Panc1 (cell line): ENCODE measurements at regions of chr10 and their contacts with region 1.

Region 1: GRCh38 chr10:32980558-32981468 is 22.8 kb upstream of the ITGB1 start:
- DNase-seq: peak; percentile 95
- ATAC-seq: peak; percentile 90
- H3K4me3 ChIP-seq: peak overlapping the region; percentile 26 to 49
- H3K27ac ChIP-seq: peak overlapping the region; percentile 100
- H3K4me1 ChIP-seq: peaks cover 62% of the 10 kb centered on the region
- H3K27me3 ChIP-seq: no peaks in the 10 kb centered on the region
- CTCF ChIP-seq: no peak

Region 2: DNA sequence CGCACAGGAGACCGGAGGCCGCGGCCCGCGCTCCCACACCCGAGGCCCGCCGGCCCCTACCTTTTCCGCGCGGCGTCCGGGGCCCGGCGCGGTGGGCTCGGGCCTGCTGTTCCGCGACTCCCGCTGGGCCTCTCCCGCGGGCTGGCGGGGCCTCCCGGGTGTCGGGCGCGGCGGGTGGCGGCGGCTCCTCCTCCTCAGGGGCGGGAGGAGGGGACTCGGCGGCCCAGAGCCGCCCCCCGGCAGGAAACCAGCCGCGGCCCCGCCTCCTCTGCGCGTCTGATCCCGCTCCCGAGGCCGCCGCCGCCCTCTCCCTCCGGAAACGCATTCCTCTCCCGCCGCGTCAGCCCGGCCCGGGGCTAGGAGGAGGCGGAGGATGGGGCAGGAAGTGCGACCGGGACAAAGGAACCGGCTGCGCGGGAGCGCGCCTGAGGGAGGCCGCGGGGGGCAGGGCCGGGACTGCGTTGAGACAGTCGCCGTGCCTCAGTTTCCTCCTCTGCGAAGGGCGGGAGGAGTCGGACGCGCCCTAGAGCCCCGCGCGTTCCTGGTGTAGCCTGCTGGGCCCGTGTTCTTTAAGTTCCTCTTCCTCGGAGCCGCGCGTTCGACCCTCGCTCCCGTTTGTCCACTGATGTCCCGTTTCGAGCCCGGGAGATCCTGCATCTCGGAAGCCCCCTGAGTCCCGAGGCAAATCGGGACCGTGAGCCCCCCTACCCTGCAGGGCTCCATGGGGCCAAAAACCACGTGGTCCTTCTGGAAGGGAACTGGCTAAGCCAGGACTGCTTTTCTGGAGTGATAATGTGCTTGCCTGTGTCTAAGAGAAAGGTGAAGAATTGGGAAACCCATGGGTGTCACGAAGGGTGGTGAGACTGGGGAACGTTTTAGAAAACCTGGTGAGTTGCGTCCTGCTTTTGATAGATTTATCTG is 22.5 kb before region 1 on chr10 and contains the start of gene ITGB1:
- CTCF ChIA-PET with region 1: interaction called, 7 read pairs
- POLR2A ChIA-PET with region 1: interaction called, 25 read pairs
- in situ Hi-C with region 1: no loop called
- intact Hi-C with region 1: no loop called
- DNase-seq: no peak
- ATAC-seq: peak; percentile 79
- H3K4me3 ChIP-seq: peak within 1 kb of the TSS; percentile 77 to 89
- H3K27ac ChIP-seq: peak within 1 kb of the TSS; percentile 100
- H3K4me1 ChIP-seq: peaks cover 34% of the 10 kb centered on the region
- H3K27me3 ChIP-seq: no peaks in the 10 kb centered on the region
- CTCF ChIP-seq: no peak
- total RNA-seq, gene ITGB1: 803 TPM